SK-N-SH (cell line): ENCODE measurements at regions of chr14 and their contacts with region 1.

Region 1: DNA sequence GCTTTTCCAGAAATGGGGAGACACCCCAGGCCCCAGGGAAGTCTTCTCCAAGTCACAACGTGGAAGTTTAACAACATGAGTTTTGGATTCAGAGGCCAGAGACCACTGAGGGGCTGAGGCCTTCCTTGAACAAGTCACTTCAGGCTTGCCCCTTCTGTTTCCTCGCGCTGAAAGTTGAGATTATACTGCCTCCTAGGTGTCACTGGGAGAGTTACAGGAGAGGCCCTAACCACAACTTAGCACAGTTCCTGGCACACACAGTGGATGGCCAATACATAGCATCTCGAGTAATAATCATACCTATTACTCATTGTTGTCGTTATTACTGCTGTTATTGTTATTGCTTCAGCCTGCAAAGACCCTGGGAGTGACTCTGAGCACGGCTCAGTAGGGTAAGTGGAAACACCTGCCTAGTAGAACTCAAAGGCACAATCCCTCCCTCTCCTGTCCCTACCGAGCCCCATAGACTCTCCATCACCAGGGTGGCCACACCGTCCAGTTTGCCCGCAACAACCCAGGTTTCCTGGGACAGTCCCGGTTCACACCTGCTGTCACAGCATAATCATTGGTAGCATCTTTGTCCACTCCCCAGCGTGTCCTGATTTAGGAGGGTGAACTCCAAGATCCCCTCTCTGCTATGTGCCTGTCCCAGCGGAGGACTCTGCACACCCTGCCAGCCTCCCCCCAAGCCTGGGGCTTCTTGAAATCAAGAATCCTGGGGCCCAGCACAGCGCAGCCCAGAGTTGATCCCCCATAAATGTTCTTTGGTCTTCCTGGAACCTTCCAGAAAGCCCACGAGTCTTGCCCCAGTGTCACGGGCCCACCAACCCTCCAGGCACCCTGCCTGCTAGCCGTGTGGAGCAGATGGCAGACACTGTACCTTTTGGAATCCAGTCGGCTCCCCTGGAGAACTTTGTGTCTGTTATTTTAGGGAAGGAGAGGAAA is 85.0 kb downstream of the SYNE3 start:
- DNase-seq: peak; percentile 71
- H3K4me3 ChIP-seq: no peak overlapping the region
- H3K27ac ChIP-seq: no peak overlapping the region; a peak in 1 of 4 replicates
- H3K4me1 ChIP-seq: peaks cover 0 to 15% of the 10 kb centered on the region in 2 experiments; a peak in 1 of 4 replicates
- H3K27me3 ChIP-seq: no peaks in the 10 kb centered on the region
- CTCF ChIP-seq: peak; percentile 61
- EP300 ChIP-seq: no peak
- RAD21 ChIP-seq: peak; percentile 86

Region 2: GRCh38 chr14:94689218-94689984 is 742.1 kb before region 1 on chr14:
- CTCF ChIA-PET with region 1: interaction called, 72 read pairs
- POLR2A ChIA-PET with region 1: no interaction called
- DNase-seq: peak; percentile 93
- H3K4me3 ChIP-seq: peak overlapping the region in 1 of 2 experiments; percentile 39; a peak in 2 of 4 replicates
- H3K27ac ChIP-seq: no peak overlapping the region
- H3K4me1 ChIP-seq: peaks cover 0 to 6% of the 10 kb centered on the region in 2 experiments; a peak in 1 of 4 replicates
- H3K27me3 ChIP-seq: no peaks in the 10 kb centered on the region
- CTCF ChIP-seq: peak; percentile 95
- EP300 ChIP-seq: no peak
- RAD21 ChIP-seq: peak; percentile 93

Region 3: GRCh38 chr14:95098984-95099599 is 332.4 kb before region 1 on chr14:
- CTCF ChIA-PET with region 1: interaction called, 27 read pairs
- POLR2A ChIA-PET with region 1: no interaction called
- DNase-seq: peak; percentile 45
- H3K4me3 ChIP-seq: peak overlapping the region in 1 of 2 experiments; percentile 21; a peak in 1 of 4 replicates
- H3K27ac ChIP-seq: no peak overlapping the region
- H3K4me1 ChIP-seq: peaks cover 13 to 14% of the 10 kb centered on the region in 2 experiments; a peak in 3 of 4 replicates
- H3K27me3 ChIP-seq: no peaks in the 10 kb centered on the region
- CTCF ChIP-seq: peak; percentile 72
- EP300 ChIP-seq: no peak
- RAD21 ChIP-seq: peak; percentile 73

Region 4: DNA sequence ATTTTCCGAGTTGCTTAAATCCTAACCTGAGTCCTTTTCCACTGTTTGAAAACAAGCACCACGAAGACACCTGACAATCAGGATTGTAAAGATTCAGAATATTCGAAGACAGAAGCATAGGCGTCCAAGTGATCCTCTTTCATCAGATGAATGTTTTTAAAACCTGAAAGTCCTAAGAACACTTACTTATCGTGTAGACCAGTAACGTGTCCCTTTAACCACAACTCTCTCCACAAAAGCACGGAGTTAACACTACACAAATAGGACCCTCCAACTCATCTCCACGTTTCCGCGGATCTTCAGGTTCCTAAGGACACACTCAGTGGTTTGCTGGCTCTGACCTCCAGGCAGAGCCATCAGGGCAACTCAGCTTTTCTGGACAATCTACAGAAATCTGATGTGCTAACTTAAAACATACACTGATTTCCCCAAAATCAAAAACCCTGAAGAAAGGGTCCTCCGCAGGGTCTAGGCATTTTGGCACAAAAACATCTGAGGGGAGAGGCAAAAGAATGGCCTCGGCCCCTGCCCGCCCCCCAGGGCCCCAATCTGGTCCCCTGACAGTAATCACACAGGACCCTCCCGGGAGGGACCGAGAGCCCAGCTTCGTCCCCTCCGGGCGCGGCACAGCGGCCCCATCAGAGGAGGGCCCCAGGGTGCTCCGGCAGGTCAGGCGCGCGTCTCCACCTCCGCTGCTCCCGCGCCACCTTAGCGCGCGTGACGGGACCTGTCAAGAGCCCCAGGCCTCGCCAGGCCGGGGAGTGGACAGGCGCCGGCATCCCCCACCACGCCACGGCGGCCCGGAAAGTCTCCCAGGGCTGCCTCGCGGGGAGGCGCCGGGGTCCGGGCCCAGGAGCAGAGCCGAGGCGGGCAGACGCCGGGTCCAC is 275.1 kb before region 1 on chr14:
- CTCF ChIA-PET with region 1: interaction called, 10 read pairs
- POLR2A ChIA-PET with region 1: no interaction called
- DNase-seq: no peak
- H3K4me3 ChIP-seq: peak overlapping the region; percentile 78 to 87
- H3K27ac ChIP-seq: peak overlapping the region; percentile 44 to 74
- H3K4me1 ChIP-seq: peaks cover 7 to 14% of the 10 kb centered on the region in 2 experiments; a peak in 3 of 4 replicates
- H3K27me3 ChIP-seq: no peaks in the 10 kb centered on the region
- CTCF ChIP-seq: no peak
- EP300 ChIP-seq: no peak
- RAD21 ChIP-seq: no peak

Region 5: GRCh38 chr14:95442633-95443021 is 11.2 kb after region 1 on chr14:
- CTCF ChIA-PET with region 1: interaction called, 14 read pairs
- POLR2A ChIA-PET with region 1: no interaction called
- DNase-seq: peak; percentile 88
- H3K4me3 ChIP-seq: peak overlapping the region in 1 of 2 experiments; percentile 24; a peak in 1 of 4 replicates
- H3K27ac ChIP-seq: no peak overlapping the region
- H3K4me1 ChIP-seq: peaks cover 4 to 45% of the 10 kb centered on the region in 2 experiments; a peak in 3 of 4 replicates
- H3K27me3 ChIP-seq: no peaks in the 10 kb centered on the region
- CTCF ChIP-seq: peak; percentile 87
- EP300 ChIP-seq: no peak
- RAD21 ChIP-seq: peak; percentile 91

Region 6: DNA sequence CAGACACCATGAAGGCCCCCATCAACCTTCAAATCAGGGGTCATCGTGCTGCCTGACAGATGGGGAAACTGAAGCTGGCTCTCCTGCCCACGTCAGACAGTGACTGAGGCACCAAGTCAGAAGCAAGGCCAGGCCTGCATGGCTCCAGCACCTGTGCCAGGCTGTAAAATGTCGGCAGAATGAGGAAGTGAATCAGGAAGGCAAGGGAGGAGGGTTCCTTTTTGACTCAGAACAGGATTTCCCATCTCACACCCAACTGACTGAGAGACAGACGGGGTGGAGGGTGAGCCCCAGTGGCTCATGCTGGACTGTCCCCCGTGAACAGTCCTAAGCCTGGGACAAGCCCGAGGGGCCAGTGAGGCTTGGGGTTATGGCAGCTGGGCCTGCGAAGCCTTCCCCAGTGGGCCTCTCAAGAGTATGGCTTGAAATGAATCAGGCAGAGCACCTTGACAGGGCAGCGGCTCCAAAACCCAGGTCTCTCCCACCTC is 64.1 kb after region 1 on chr14:
- CTCF ChIA-PET with region 1: no interaction called
- POLR2A ChIA-PET with region 1: no interaction called
- DNase-seq: no peak
- H3K4me3 ChIP-seq: no peak overlapping the region
- H3K27ac ChIP-seq: peak overlapping the region; percentile 67 to 83; a peak in 3 of 4 replicates
- H3K4me1 ChIP-seq: peaks cover 16 to 36% of the 10 kb centered on the region in 2 experiments; a peak in 2 of 4 replicates
- H3K27me3 ChIP-seq: no peaks in the 10 kb centered on the region
- CTCF ChIP-seq: no peak
- EP300 ChIP-seq: no peak
- RAD21 ChIP-seq: no peak